Mammary epithelial cell (primary cell): ENCODE measurements at regions of chr1 and their contacts with region 1.

Region 1: DNA sequence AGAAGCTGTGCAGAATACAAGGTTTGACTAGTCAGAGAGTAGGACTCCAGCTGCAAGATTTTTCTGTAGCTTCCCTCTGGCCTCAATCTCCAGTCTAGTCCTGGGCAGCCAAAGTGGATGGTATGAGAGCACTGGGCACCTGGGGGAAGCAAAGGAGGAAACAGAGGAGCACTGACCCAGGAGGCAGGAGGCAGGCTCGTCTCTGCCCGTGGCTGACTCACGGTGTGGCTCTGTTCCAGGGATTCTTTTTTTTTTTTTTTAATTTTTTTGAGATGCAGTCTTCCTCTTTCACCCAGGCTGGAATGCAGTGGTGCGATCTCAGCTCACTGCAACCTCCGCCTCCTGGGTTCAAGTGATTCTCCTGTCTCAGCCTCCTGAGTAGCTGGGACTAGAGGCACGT is 4.1 kb upstream of the NPPB start:
- DNase-seq: peak; percentile 44
- H3K4me3 ChIP-seq: no peak overlapping the region
- H3K27ac ChIP-seq: no peak overlapping the region
- H3K4me1 ChIP-seq: peaks cover 11% of the 10 kb centered on the region
- H3K27me3 ChIP-seq: peaks cover 16% of the 10 kb centered on the region
- CTCF ChIP-seq: no peak

Region 2: GRCh38 chr1:11813021-11813420 is 49.9 kb before region 1 on chr1:
- CTCF ChIA-PET with region 1: no interaction called
- dilution Hi-C with region 1: loop called (anchors 5 kb)
- in situ Hi-C with region 1: no loop called
- intact Hi-C with region 1: no loop called
- DNase-seq: no peak
- H3K4me3 ChIP-seq: no peak overlapping the region
- H3K27ac ChIP-seq: no peak overlapping the region
- H3K4me1 ChIP-seq: peaks cover 3% of the 10 kb centered on the region
- H3K27me3 ChIP-seq: no peaks in the 10 kb centered on the region
- CTCF ChIP-seq: no peak